Naive thymus-derived CD4-positive, alpha-beta T cell (primary cell): ENCODE measurements at regions of chr2 and their contacts with region 1.

Region 1: DNA sequence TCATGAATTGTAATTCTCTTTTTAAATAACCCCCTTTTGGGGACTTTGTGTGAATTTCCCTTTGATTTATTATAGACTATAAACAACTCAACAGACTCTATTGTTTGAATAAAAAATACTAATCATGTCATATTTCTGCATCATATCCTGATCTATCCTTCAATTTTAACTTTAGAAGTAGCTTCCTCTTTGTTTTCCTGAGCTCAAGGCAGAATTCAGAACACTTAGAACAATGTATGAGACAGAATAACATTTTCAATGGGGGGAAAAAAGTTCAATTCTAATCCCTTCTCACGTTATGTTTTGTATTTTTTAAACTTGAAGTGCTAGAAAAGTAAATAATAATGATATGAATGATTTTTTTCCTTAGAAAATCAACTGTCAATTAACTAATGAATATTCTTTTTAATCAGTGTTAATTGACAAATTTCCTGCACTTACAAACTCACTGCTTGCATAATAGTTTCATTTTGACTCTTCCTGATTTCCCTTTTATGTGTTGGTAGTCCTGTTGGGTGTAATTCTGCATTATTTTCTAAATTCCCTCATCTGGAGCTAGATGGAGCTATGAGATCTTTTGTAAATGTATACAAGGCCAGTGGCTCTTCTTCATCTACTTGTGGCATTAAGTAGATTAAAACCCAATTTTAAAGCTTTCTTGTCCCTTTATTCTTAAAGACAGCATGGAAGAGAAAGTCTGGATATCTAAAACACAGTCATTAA is 326.1 kb downstream of the PARD3B start:
- DNase-seq: peak in 6 of 9 donors; percentile 30 to 66 (median 53)
- ATAC-seq: peak; percentile 61
- H3K4me3 ChIP-seq: no peak overlapping the region
- H3K4me3 Mint-ChIP-seq: peak overlapping the region in 5 of 10 donors; percentile 0 to 19 (median 1)
- H3K27ac ChIP-seq: no peak overlapping the region
- H3K27ac Mint-ChIP-seq: peak overlapping the region in 7 of 9 donors; percentile 0 to 44 (median 12)
- H3K4me1 ChIP-seq: peaks cover 0 to 27% of the 10 kb centered on the region in 2 donors
- H3K4me1 Mint-ChIP-seq: peaks cover 15 to 57% (median 44%) of the 10 kb centered on the region in 7 donors
- H3K27me3 ChIP-seq: no peaks in the 10 kb centered on the region
- H3K27me3 Mint-ChIP-seq: peaks cover 0 to 18% (median 0%) of the 10 kb centered on the region in 5 donors

Region 2: GRCh38 chr2:204585930-204586329 is 285.5 kb before region 1 on chr2:
- CTCF ChIA-PET with region 1: no interaction called
- POLR2A ChIA-PET with region 1: no interaction called
- intact Hi-C with region 1: no loop called
- DNase-seq: no peak
- ATAC-seq: no peak
- H3K4me3 ChIP-seq: no peak overlapping the region
- H3K4me3 Mint-ChIP-seq: no peak overlapping the region
- H3K27ac ChIP-seq: no peak overlapping the region
- H3K27ac Mint-ChIP-seq: no peak overlapping the region
- H3K4me1 ChIP-seq: no peaks in the 10 kb centered on the region
- H3K4me1 Mint-ChIP-seq: no peaks in the 10 kb centered on the region
- H3K27me3 ChIP-seq: no peaks in the 10 kb centered on the region
- H3K27me3 Mint-ChIP-seq: peaks cover 6 to 22% (median 8%) of the 10 kb centered on the region in 5 donors

Region 3: GRCh38 chr2:204950671-204951346 is 79.4 kb after region 1 on chr2:
- CTCF ChIA-PET with region 1: interaction called, 4 read pairs
- POLR2A ChIA-PET with region 1: interaction called, 3 read pairs
- intact Hi-C with region 1: loop called in 1 of 2 experiments (anchors 2 kb)
- DNase-seq: no peak
- ATAC-seq: no peak
- H3K4me3 ChIP-seq: no peak overlapping the region
- H3K4me3 Mint-ChIP-seq: peak overlapping the region in 1 of 10 donors; percentile 24
- H3K27ac ChIP-seq: no peak overlapping the region
- H3K27ac Mint-ChIP-seq: peak overlapping the region in 7 of 9 donors; percentile 27 to 84 (median 73)
- H3K4me1 ChIP-seq: peaks cover 6 to 37% of the 10 kb centered on the region in 2 donors
- H3K4me1 Mint-ChIP-seq: peaks cover 30 to 76% (median 64%) of the 10 kb centered on the region in 7 donors
- H3K27me3 ChIP-seq: no peaks in the 10 kb centered on the region
- H3K27me3 Mint-ChIP-seq: no peaks in the 10 kb centered on the region

Region 4: DNA sequence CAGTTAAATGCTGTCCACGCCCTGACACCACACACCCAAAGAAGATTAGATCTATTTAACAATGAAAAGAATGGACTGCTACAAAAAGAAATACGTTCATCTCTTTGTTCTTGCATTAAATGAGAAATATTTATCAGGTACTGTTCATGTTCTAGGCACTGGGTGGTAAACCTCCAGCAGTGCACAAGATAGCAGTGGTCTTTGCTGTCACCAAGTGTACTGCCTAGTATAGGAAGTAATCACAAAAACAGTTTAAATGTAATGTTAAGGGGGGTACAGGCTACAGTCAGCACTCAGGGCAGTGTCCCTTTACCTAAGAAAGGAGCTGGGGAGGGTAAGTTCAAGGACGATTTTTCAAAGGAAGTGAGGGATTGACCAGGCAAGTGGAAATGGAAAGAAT is 117.4 kb after region 1 on chr2:
- CTCF ChIA-PET with region 1: no interaction called
- POLR2A ChIA-PET with region 1: no interaction called
- intact Hi-C with region 1: loop called in 1 of 2 experiments (anchors 1 kb)
- DNase-seq: no peak
- ATAC-seq: no peak
- H3K4me3 ChIP-seq: no peak overlapping the region
- H3K4me3 Mint-ChIP-seq: no peak overlapping the region
- H3K27ac ChIP-seq: no peak overlapping the region
- H3K27ac Mint-ChIP-seq: peak overlapping the region in 2 of 9 donors; percentile 15 to 17
- H3K4me1 ChIP-seq: no peaks in the 10 kb centered on the region
- H3K4me1 Mint-ChIP-seq: peaks cover 0 to 20% (median 6%) of the 10 kb centered on the region in 7 donors
- H3K27me3 ChIP-seq: no peaks in the 10 kb centered on the region
- H3K27me3 Mint-ChIP-seq: peaks cover 0 to 3% (median 0%) of the 10 kb centered on the region in 5 donors

Region 5: DNA sequence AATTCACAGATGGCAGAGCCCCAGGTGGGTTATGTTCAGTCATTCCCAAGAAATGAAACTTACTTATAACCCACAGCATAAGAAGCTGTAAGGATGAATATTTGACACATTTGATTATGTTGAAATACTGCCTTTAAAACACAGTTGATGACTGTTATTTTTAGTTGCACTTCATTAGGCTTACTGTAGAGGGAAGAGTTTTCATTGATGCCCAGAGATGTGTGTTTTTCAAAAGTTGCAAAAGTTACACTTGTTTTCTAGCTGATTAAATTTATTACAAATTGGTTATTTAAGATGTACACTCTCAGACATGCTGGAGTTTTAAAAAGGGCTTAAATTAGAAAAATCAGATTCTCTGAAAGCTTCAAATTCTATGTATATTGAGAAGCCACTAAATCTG is 180.0 kb after region 1 on chr2:
- CTCF ChIA-PET with region 1: interaction called, 7 read pairs
- POLR2A ChIA-PET with region 1: no interaction called
- intact Hi-C with region 1: loop called in 1 of 2 experiments (anchors 2 kb)
- DNase-seq: peak in 4 of 9 donors; percentile 18 to 21 (median 19)
- ATAC-seq: no peak
- H3K4me3 ChIP-seq: no peak overlapping the region
- H3K4me3 Mint-ChIP-seq: no peak overlapping the region
- H3K27ac ChIP-seq: no peak overlapping the region
- H3K27ac Mint-ChIP-seq: no peak overlapping the region
- H3K4me1 ChIP-seq: no peaks in the 10 kb centered on the region
- H3K4me1 Mint-ChIP-seq: peaks cover 2 to 41% (median 32%) of the 10 kb centered on the region in 7 donors
- H3K27me3 ChIP-seq: no peaks in the 10 kb centered on the region
- H3K27me3 Mint-ChIP-seq: no peaks in the 10 kb centered on the region

Region 6: GRCh38 chr2:205133544-205133943 is 262.2 kb after region 1 on chr2:
- CTCF ChIA-PET with region 1: interaction called, 51 read pairs
- POLR2A ChIA-PET with region 1: interaction called, 13 read pairs
- intact Hi-C with region 1: loop called (anchors 1 kb)
- DNase-seq: no peak
- ATAC-seq: no peak
- H3K4me3 ChIP-seq: no peak overlapping the region
- H3K4me3 Mint-ChIP-seq: no peak overlapping the region
- H3K27ac ChIP-seq: no peak overlapping the region
- H3K27ac Mint-ChIP-seq: no peak overlapping the region
- H3K4me1 ChIP-seq: peaks cover 0 to 16% of the 10 kb centered on the region in 2 donors
- H3K4me1 Mint-ChIP-seq: peaks cover 13 to 31% (median 23%) of the 10 kb centered on the region in 7 donors
- H3K27me3 ChIP-seq: no peaks in the 10 kb centered on the region
- H3K27me3 Mint-ChIP-seq: no peaks in the 10 kb centered on the region

Region 7: GRCh38 chr2:205766779-205767359 is 895.5 kb after region 1 on chr2:
- CTCF ChIA-PET with region 1: no interaction called
- POLR2A ChIA-PET with region 1: no interaction called
- intact Hi-C with region 1: loop called in 1 of 2 experiments (anchors 2 kb)
- DNase-seq: peak in 8 of 9 donors; percentile 7 to 49 (median 40)
- ATAC-seq: peak; percentile 49
- H3K4me3 ChIP-seq: no peak overlapping the region
- H3K4me3 Mint-ChIP-seq: peak overlapping the region in 1 of 10 donors; percentile 25
- H3K27ac ChIP-seq: no peak overlapping the region
- H3K27ac Mint-ChIP-seq: no peak overlapping the region
- H3K4me1 ChIP-seq: no peaks in the 10 kb centered on the region
- H3K4me1 Mint-ChIP-seq: peaks cover 0 to 12% (median 8%) of the 10 kb centered on the region in 7 donors
- H3K27me3 ChIP-seq: no peaks in the 10 kb centered on the region
- H3K27me3 Mint-ChIP-seq: peaks cover 27 to 54% (median 35%) of the 10 kb centered on the region in 5 donors

Region 8: DNA sequence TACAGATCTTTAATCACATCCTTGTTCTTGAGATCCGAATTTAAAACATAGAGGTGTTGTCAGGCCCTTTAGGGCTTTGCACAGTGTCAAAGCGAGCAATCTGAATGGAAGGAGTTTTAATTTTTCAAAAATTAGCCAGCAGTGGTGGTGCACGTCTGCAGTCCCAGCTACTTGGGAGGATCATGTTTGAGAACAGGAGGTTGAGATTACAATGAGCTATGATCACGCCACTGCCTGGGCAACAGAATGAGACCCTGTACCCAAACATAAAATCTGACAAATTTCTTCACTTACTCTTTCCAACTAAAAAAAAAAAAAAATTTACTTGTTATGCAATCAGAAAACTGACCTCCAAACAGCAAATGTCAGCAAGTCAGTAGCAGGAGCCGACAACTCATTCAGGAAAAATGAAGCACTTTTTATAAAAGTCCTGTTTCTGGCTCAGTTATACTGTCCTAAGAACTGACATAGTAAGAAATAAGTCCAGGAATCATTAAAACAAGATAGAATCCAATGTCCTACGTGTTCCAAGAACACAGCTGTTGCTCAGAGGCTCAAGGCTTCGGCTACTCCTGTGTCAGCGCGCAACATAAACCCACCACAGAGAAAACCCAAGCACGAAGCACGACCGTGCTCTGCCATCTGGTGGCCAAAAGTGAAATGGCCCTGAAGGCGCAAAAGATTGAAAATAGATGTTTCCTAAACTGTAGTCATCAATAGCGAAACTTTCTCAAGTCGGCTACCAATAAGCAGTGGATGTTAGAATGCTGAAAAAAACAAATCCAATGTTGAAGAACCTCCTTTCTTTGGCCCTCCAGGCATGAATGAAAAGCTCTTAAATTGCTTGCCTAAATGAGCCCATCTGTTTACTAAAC is 1076.5 kb after region 1 on chr2:
- CTCF ChIA-PET with region 1: interaction called, 3 read pairs
- POLR2A ChIA-PET with region 1: no interaction called
- intact Hi-C with region 1: loop called in 1 of 2 experiments (anchors 1 kb)
- DNase-seq: peak in 8 of 9 donors; percentile 12 to 53 (median 28)
- ATAC-seq: peak; percentile 71
- H3K4me3 ChIP-seq: no peak overlapping the region
- H3K4me3 Mint-ChIP-seq: peak overlapping the region in 1 of 10 donors; percentile 13
- H3K27ac ChIP-seq: no peak overlapping the region
- H3K27ac Mint-ChIP-seq: no peak overlapping the region
- H3K4me1 ChIP-seq: no peaks in the 10 kb centered on the region
- H3K4me1 Mint-ChIP-seq: peaks cover 0 to 4% (median 3%) of the 10 kb centered on the region in 7 donors
- H3K27me3 ChIP-seq: no peaks in the 10 kb centered on the region
- H3K27me3 Mint-ChIP-seq: peaks cover 0 to 25% (median 9%) of the 10 kb centered on the region in 5 donors